WTC11 (cell line): ENCODE measurements at regions of chr16 and their contacts with region 1.

Region 1: GRCh38 chr16:19907161-19907992 is 22.7 kb upstream of the GPRC5B start:
- DNase-seq: peak; percentile 88
- ATAC-seq: peak; percentile 95
- H3K4me3 Mint-ChIP-seq: peak overlapping the region; percentile 12; the same call in 1 of the 2 replicates
- H3K27ac Mint-ChIP-seq: peak overlapping the region; percentile 66; the same call in 1 of the 2 replicates
- H3K4me1 Mint-ChIP-seq: peaks cover 15% of the 10 kb centered on the region
- H3K27me3 Mint-ChIP-seq: no peaks in the 10 kb centered on the region; the same call in 1 of the 2 replicates
- CTCF ChIP-seq: peak; percentile 92

Region 2: DNA sequence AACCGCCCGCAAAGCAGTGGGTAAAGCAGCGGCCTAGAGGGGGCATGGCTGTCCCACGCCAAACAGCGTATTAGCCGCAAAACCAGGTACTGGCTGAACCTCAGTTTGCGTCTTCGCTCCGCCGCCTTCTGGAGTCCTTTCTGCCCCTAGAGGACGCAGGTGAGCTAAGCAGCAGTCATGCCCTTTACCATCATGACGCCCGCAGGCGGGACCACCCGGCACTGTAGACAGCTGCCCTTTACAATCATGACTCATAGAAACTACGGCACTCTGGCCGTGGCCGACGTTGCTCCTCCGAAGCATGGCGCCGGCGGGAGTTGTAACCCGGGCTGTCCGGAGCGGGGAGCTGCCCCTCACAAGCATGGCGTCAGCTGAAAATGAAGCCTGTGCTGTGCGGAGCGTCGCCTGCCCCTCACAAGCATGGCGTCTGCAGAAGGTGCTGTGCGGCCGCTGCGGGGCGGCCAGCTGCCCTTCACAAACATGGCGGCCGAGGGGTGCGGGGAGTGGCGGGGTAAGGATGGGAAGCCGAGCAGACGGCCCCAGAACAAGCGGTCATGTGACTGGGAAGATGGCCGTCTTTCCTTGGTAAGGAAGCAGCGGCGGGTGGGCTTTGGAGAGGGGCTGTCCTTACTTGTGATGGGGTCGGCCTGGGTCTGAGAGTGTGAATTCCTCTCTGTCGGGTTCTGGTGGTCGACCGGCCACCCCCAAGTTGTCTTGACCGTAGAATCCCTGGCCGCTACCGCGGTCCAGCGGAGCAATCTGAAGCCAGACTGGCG is 352.0 kb before region 1 on chr16 and contains the start of gene VPS35L:
- CTCF ChIA-PET with region 1: interaction called, 11 read pairs
- POLR2A ChIA-PET with region 1: no interaction called
- DNase-seq: peak; percentile 98
- ATAC-seq: peak; percentile 89
- H3K4me3 Mint-ChIP-seq: peak within 1 kb of the TSS; percentile 94
- H3K27ac Mint-ChIP-seq: peak within 1 kb of the TSS; percentile 98
- H3K4me1 Mint-ChIP-seq: peaks cover 20% of the 10 kb centered on the region
- H3K27me3 Mint-ChIP-seq: no peaks in the 10 kb centered on the region
- CTCF ChIP-seq: peak; percentile 27; the same call in 1 of the 2 replicates
- total RNA-seq, gene VPS35L: 59.7 to 71.7 TPM (median 65.5 TPM) in 3 replicates

Region 3: DNA sequence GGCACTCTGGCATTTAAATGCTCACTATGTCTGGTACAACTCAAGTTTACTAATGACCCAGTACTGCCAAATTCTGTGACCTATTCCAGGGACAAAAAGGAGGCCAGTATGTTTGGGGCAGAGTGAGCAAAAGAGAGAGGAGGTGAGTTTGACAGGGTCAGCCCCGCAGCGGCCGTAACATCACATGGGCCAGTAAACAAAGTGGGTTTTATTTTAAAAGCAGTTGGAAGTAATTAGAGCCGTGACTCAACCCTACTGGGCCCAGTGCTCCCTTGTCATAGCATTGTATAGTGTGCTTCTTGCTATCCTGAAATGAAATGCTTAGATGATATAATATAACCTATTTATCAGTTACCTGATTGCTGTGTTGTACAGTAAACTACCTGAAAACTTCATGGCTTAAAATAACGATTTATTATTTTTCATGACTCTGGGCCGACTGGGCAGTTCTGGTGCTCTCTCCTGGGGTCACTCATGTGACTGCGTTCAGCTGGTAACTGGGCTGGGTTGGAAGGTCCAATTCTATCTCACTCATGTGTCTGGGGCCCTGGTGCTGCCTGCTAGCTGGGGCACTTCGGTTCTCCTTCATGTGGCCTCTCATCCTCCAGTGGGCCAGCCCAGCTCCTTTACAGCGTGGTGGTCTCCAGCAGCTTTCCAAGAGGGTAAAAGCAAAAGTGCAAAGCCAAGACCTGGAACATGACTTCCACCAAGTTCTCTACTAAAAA is 161.9 kb before region 1 on chr16:
- CTCF ChIA-PET with region 1: no interaction called
- POLR2A ChIA-PET with region 1: no interaction called
- DNase-seq: no peak
- ATAC-seq: no peak
- H3K4me3 Mint-ChIP-seq: no peak overlapping the region
- H3K27ac Mint-ChIP-seq: peak overlapping the region; percentile 4; the same call in 1 of the 2 replicates
- H3K4me1 Mint-ChIP-seq: peaks cover 2% of the 10 kb centered on the region; the same call in 1 of the 2 replicates
- H3K27me3 Mint-ChIP-seq: no peaks in the 10 kb centered on the region
- CTCF ChIP-seq: no peak

Region 4: GRCh38 chr16:19980632-19981265 is 73.4 kb after region 1 on chr16:
- CTCF ChIA-PET with region 1: interaction called, 67 read pairs
- POLR2A ChIA-PET with region 1: no interaction called
- DNase-seq: peak; percentile 41
- ATAC-seq: peak; percentile 92
- H3K4me3 Mint-ChIP-seq: no peak overlapping the region
- H3K27ac Mint-ChIP-seq: 0 out of 2 replicates have a peak overlapping the region, but pooled peaks have one; percentile 34
- H3K4me1 Mint-ChIP-seq: peaks cover 30% of the 10 kb centered on the region
- H3K27me3 Mint-ChIP-seq: no peaks in the 10 kb centered on the region
- CTCF ChIP-seq: peak; percentile 46

Region 5: DNA sequence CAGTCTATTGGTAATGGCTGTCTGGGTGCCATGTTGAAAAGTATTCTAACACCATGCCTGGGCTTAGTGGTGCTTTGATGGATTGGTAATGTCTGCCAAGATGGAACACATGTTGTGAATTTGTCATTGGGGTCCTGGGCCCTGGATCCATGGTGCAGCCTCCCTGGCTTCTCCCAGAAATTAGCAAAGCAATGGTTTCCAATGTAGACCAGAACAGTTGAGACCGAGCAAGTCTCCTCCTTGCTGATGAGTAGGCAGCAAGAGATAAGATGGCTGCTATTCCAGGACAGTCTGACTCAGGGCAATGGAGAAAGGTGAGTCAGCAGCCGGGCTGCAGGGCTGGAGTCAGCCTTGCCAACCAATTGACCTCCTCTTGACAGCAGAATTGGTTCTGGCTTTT is 135.5 kb after region 1 on chr16:
- CTCF ChIA-PET with region 1: interaction called, 19 read pairs
- POLR2A ChIA-PET with region 1: no interaction called
- DNase-seq: no peak
- ATAC-seq: no peak
- H3K4me3 Mint-ChIP-seq: no peak overlapping the region
- H3K27ac Mint-ChIP-seq: no peak overlapping the region
- H3K4me1 Mint-ChIP-seq: peaks cover 26% of the 10 kb centered on the region
- H3K27me3 Mint-ChIP-seq: no peaks in the 10 kb centered on the region
- CTCF ChIP-seq: no peak

Region 6: GRCh38 chr16:20094157-20094556 is 186.8 kb after region 1 on chr16:
- CTCF ChIA-PET with region 1: interaction called, 14 read pairs
- POLR2A ChIA-PET with region 1: no interaction called
- DNase-seq: no peak
- ATAC-seq: no peak; the same call in 1 of the 2 replicates
- H3K4me3 Mint-ChIP-seq: no peak overlapping the region
- H3K27ac Mint-ChIP-seq: no peak overlapping the region
- H3K4me1 Mint-ChIP-seq: peaks cover 3% of the 10 kb centered on the region
- H3K27me3 Mint-ChIP-seq: no peaks in the 10 kb centered on the region
- CTCF ChIP-seq: no peak

Region 7: GRCh38 chr16:20260215-20261007 is 353.0 kb after region 1 on chr16:
- CTCF ChIA-PET with region 1: interaction called, 24 read pairs
- POLR2A ChIA-PET with region 1: no interaction called
- DNase-seq: no peak
- ATAC-seq: no peak; the same call in 1 of the 2 replicates
- H3K4me3 Mint-ChIP-seq: no peak overlapping the region
- H3K27ac Mint-ChIP-seq: no peak overlapping the region
- H3K4me1 Mint-ChIP-seq: peaks cover 27% of the 10 kb centered on the region
- H3K27me3 Mint-ChIP-seq: no peaks in the 10 kb centered on the region; the same call in 1 of the 2 replicates
- CTCF ChIP-seq: no peak

Region 8: DNA sequence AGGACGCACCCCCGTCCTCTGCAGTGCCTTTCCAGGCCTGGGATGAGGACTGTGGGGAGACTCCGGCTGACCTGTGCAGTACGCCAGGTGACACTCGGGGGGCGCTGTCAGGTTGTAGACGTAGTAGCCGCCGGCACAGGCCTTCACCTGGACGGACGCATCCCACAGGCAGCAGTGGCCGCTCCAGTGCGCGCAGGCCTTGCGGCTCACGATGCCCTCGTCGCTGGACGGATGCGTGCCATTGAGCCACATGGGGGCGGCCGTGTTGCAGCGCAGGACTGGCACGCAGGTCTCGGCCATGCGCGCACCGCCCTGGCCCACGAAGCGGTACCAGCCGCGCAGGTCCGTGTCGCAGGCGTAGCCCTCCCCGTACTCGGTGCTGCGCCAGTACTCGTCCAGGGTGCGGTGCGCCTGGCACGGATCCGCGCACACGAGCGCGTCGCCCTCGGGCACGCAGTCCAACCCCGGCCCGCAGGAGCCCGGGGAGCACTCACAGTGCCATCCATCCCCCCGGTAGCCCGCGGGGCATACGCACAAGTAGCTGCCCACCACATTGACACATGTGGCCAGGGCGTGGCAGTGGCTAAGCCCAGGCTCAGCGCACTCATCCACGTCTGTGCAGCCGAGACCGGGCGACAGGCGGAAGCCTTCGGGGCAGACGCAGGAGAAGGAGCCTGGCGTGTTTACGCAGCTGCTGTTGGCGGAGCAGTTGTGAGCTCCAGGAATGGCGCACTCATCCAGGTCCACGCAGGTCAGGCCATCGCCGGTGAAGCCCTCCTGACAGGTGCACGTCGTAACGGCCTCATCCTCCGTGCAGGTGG is 441.2 kb after region 1 on chr16:
- CTCF ChIA-PET with region 1: interaction called, 26 read pairs
- POLR2A ChIA-PET with region 1: no interaction called
- DNase-seq: peak; percentile 86
- ATAC-seq: peak; percentile 95
- H3K4me3 Mint-ChIP-seq: no peak overlapping the region
- H3K27ac Mint-ChIP-seq: no peak overlapping the region
- H3K4me1 Mint-ChIP-seq: peaks cover 11% of the 10 kb centered on the region
- H3K27me3 Mint-ChIP-seq: no peaks in the 10 kb centered on the region
- CTCF ChIP-seq: peak; percentile 63; the same call in 1 of the 2 replicates